CD8-positive, alpha-beta T cell (primary cell): ENCODE measurements at regions of chr1 and their contacts with region 1.

Region 1: DNA sequence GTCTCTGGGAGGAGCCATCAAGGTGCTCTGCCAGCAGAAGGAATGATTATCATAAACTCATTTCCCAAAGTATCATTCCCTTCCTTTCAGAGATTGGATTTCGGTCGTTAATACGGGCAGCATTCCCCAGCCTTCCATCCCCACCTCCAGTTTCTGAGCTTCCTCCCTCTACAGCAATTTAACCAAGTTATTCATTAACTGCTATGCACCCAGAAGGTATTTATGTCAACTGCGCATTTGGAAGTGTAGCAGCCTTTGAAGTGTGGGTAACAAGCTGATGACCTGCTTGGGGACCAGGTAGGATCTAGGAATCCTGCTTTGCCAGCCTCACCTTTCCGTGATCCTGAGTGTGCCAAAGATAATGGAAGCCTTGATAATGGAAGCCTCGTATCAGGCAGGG is 172.4 kb upstream of the IGSF21 start:
- DNase-seq: no peak
- ATAC-seq: no peak
- H3K4me3 ChIP-seq: no peak overlapping the region
- H3K4me3 Mint-ChIP-seq: no peak overlapping the region
- H3K27ac ChIP-seq: no peak overlapping the region
- H3K27ac Mint-ChIP-seq: no peak overlapping the region
- H3K4me1 ChIP-seq: no peaks in the 10 kb centered on the region
- H3K4me1 Mint-ChIP-seq: no peaks in the 10 kb centered on the region
- H3K27me3 ChIP-seq: no peaks in the 10 kb centered on the region
- H3K27me3 Mint-ChIP-seq: peaks cover 8% of the 10 kb centered on the region
- CTCF ChIP-seq: no peak

Region 2: DNA sequence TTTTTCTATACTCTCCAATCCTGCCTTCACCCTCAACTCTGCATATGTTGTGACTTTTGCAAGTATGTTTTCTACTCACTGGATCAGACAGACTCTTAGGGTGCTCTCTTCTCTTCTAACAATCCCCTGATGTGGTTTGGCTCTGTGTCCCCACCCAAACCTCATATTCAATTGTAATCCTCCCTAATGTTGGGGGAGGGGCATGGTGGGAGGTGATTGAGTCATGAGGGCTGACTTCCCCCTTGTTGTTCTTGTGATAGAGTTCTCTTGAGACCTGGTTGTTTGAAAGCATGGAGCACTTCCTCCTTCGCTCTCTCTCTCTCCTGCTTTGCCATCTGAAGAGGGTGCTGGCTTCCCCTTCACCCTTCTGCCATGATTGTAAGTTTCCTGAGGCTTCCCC is 23.5 kb after region 1 on chr1:
- CTCF ChIA-PET with region 1: no interaction called
- POLR2A ChIA-PET with region 1: no interaction called
- intact Hi-C with region 1: loop called in 1 of 2 experiments (anchors 1 kb)
- DNase-seq: peak in 4 of 9 experiments; percentile 0 to 47 (median 9)
- ATAC-seq: peak; percentile 71
- H3K4me3 ChIP-seq: no peak overlapping the region
- H3K4me3 Mint-ChIP-seq: no peak overlapping the region
- H3K27ac ChIP-seq: no peak overlapping the region
- H3K27ac Mint-ChIP-seq: peak overlapping the region; percentile 66
- H3K4me1 ChIP-seq: peaks cover 10% of the 10 kb centered on the region
- H3K4me1 Mint-ChIP-seq: peaks cover 14% of the 10 kb centered on the region
- H3K27me3 ChIP-seq: no peaks in the 10 kb centered on the region
- H3K27me3 Mint-ChIP-seq: peaks cover 4% of the 10 kb centered on the region
- CTCF ChIP-seq: no peak